ENCODE measurements at regions of chr17 and their contacts with region 1.

Region 1: DNA sequence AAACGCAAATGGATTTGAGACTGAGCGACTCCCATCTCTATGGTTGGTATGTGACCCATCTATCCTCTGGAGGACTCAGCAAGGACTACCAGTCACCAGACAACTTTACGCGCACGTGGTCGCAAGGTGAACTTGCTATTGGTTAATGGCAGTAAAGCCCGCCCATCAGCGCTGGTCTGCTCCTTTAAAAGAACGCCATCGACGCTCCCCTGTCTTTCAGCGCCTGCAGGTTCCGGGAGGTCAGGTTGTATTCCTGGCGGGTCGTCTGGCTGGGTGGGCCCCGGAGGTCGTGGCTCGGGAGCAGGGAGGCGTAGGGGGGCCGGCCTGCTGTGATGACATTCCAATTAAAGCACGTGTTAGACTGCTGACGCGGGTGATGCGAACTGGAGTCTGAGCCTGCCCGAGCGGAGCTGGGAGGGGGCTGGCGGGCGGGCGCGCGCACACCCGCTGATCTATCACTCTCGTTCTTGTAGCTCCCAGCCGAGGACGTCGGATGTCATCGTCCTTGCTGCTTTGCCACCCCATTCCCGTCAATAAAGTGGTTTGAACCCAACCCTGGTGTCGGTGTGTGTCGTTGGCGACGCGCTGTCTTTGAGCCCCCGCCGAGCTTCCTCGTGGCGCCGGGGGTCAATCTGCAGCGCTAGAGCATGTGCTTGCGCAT is 15.9 kb upstream of the ERN1 start:
- DNase-seq: peak; percentile 100
- H3K4me3 ChIP-seq: peak overlapping the region; percentile 86
- CTCF ChIP-seq: no peak

Region 2: GRCh38 chr17:64202675-64203344 is 56.9 kb after region 1 on chr17:
- CTCF ChIA-PET with region 1: no interaction called
- POLR2A ChIA-PET with region 1: interaction called, 12 read pairs
- DNase-seq: no peak
- H3K4me3 ChIP-seq: no peak overlapping the region
- CTCF ChIP-seq: no peak

Region 3: GRCh38 chr17:64230795-64231408 is 85.0 kb after region 1 on chr17:
- CTCF ChIA-PET with region 1: interaction called, 5 read pairs
- POLR2A ChIA-PET with region 1: interaction called, 15 read pairs
- DNase-seq: peak; percentile 93
- H3K4me3 ChIP-seq: no peak overlapping the region
- CTCF ChIP-seq: peak; percentile 19

Region 4: GRCh38 chr17:64240741-64241347 is 95.0 kb after region 1 on chr17:
- CTCF ChIA-PET with region 1: interaction called, 5 read pairs
- POLR2A ChIA-PET with region 1: interaction called, 11 read pairs
- DNase-seq: no peak
- H3K4me3 ChIP-seq: no peak overlapping the region; the same call in 1 of the 2 replicates
- CTCF ChIP-seq: no peak

Region 5: GRCh38 chr17:64262417-64263260 is 116.8 kb after region 1 on chr17 and contains the start of gene TEX2:
- CTCF ChIA-PET with region 1: interaction called, 4 read pairs
- POLR2A ChIA-PET with region 1: interaction called, 29 read pairs
- DNase-seq: no peak
- H3K4me3 ChIP-seq: peak within 1 kb of the TSS; percentile 79
- CTCF ChIP-seq: no peak

Region 6: DNA sequence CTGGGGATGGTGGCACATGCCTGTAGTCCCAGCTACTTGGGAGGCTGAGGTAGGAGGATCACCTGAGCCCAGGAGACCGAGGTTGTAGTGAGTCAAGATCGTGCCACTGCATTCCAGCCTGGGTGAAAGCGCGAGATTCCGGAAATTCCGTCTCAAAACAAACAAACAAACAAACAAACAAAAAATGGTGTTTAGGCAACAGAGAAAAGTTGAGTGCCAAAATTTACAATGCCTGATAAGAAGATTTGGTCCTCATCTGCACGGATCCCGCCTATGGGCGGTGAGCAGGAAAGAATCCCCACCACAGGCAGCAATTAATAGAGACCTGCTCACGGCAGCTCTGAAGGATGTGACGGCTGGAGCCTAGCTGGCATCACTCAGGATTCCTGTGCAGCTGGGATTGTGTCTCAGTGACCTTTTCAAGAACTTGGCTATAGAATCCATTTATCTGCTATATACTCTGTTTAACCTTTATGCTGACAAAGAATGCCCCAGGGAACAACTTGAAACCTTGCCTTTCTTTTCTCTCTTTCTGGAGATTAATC is 131.1 kb after region 1 on chr17:
- CTCF ChIA-PET with region 1: interaction called, 90 read pairs
- POLR2A ChIA-PET with region 1: interaction called, 12 read pairs
- DNase-seq: no peak
- H3K4me3 ChIP-seq: no peak overlapping the region
- CTCF ChIP-seq: no peak

Region 7: GRCh38 chr17:64281962-64282727 is 136.3 kb after region 1 on chr17:
- CTCF ChIA-PET with region 1: interaction called, 90 read pairs
- POLR2A ChIA-PET with region 1: interaction called, 12 read pairs
- DNase-seq: no peak
- H3K4me3 ChIP-seq: no peak overlapping the region
- CTCF ChIP-seq: peak; percentile 62

Measured in AG04449 (cell line).